GM12878 (cell line): ENCODE measurements at regions of chr15 and their contacts with region 1.

Region 1: GRCh38 chr15:75694241-75695182 is 18.1 kb downstream of the CSPG4 start:
- DNase-seq: no peak
- ATAC-seq: no peak
- H3K4me3 ChIP-seq: no peak overlapping the region
- H3K27ac ChIP-seq: peak overlapping the region; percentile 70
- H3K4me1 ChIP-seq: peaks cover 38% of the 10 kb centered on the region
- H3K27me3 ChIP-seq: no peaks in the 10 kb centered on the region
- CTCF ChIP-seq: peak in 2 of 3 experiments; percentile 25 to 55; a peak in 4 of 6 replicates
- EP300 ChIP-seq: no peak
- POLR2A ChIP-seq: no peak
- RAD21 ChIP-seq: no peak

Region 2: DNA sequence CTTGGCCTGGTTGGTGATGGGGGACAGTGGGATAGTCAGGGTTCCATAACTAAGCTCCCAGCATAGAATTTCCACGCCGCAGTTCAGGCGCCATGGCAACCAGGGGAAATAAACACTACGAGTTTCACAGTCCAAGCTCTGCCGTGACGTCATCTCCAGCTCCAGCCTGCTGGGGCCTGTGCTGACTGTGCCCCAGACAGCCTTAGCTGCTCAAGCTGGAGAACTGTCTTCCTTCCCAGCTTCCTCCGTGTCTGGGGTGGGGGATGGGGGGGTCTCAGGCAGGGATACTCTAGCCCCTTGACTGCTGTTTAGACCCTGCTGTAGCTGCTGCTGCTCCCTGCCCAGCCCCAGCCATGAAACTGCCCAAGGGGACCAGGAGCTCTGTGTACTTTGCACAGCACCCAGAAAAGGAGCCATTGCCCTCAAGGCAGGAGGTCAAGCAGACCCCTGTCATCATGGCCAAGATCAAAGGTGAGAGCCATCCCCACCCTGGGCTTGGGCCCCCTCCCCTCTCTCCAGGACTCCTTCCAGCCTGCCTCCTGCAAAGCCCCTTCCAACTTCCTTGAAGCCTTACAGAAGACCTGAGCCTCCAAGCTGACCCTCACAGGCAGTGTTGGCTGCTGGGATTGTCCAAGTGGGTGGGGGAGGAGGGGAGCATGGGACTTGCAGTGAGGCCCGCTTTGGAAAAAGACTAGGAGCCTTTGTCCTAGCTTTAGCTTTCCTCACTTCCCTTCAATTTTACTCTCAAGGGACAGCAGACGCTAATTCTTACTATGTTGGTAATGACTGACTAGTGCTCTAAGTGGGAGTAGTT is 29.5 kb after region 1 on chr15:
- CTCF ChIA-PET with region 1: interaction called, 8 read pairs
- POLR2A ChIA-PET with region 1: interaction called, 3 read pairs
- RAD21 ChIA-PET with region 1: interaction called, 6 read pairs
- SMC1A ChIA-PET with region 1: interaction called, 11 read pairs
- in situ Hi-C with region 1: no loop called
- intact Hi-C with region 1: no loop called
- DNase-seq: no peak
- ATAC-seq: peak; percentile 86
- H3K4me3 ChIP-seq: no peak overlapping the region
- H3K27ac ChIP-seq: no peak overlapping the region
- H3K4me1 ChIP-seq: peaks cover 3% of the 10 kb centered on the region; the same call in 1 of the 2 replicates
- H3K27me3 ChIP-seq: no peaks in the 10 kb centered on the region
- CTCF ChIP-seq: no peak
- EP300 ChIP-seq: peak in 1 of 2 experiments; percentile 37; a peak in 1 of 4 replicates
- POLR2A ChIP-seq: no peak
- RAD21 ChIP-seq: no peak